ENCODE measurements at regions of chr21 and their contacts with region 1.

Region 1: GRCh38 chr21:38126669-38127303 is 130.0 kb upstream of the KCNJ15 start:
- DNase-seq: peak; percentile 60 to 82
- ATAC-seq: peak; percentile 68
- H3K4me3 ChIP-seq: no peak overlapping the region
- H3K27ac ChIP-seq: no peak overlapping the region
- H3K4me1 ChIP-seq: peaks cover 0 to 1% of the 10 kb centered on the region in 2 donors
- H3K27me3 ChIP-seq: no peaks in the 10 kb centered on the region

Region 2: DNA sequence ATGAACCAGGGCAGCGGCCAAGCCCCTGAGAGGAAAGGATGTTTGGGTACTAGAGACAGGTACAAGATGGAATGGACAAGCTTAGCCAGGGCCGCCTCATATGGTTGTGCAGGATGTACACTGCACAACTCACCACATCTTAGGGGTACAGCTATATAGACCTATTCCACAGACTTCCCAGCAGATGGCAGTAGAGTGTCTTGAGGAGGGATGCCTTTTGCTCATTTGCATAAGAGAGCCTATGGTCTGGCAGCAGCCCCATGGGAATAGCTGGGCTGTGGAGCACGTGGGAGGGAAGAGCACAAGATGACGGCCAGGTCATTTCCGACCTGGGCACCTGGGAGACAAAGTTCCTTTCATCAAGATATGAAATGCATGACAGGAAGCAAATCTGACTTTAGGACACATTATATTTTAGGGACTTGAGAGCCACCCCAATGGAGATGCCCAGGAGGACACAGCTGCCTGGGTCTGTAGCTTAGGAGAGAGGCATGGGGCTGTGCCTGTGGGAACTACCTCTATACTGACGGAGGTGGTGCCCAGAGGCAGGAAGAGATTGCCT is 426.1 kb before region 1 on chr21:
- intact Hi-C with region 1: loop called in 1 of 2 experiments (anchors 5 kb)
- DNase-seq: peak in 1 of 2 donors; percentile 53
- ATAC-seq: peak; percentile 60
- H3K4me3 ChIP-seq: no peak overlapping the region
- H3K27ac ChIP-seq: no peak overlapping the region
- H3K4me1 ChIP-seq: no peaks in the 10 kb centered on the region
- H3K27me3 ChIP-seq: no peaks in the 10 kb centered on the region

Region 3: GRCh38 chr21:37849506-37850102 is 277.2 kb before region 1 on chr21:
- intact Hi-C with region 1: no loop called
- DNase-seq: no peak
- ATAC-seq: no peak
- H3K4me3 ChIP-seq: no peak overlapping the region
- H3K27ac ChIP-seq: peak overlapping the region in 1 of 2 donors; percentile 4
- H3K4me1 ChIP-seq: peaks cover 0 to 6% of the 10 kb centered on the region in 2 donors
- H3K27me3 ChIP-seq: no peaks in the 10 kb centered on the region

Measured in aorta (tissue), 5 donors.